Caco-2 (cell line): ENCODE measurements at regions of chr6 and their contacts with region 1.

Region 1: GRCh38 chr6:143965503-143966171 is 42.4 kb downstream of the PLAGL1 start:
- DNase-seq: no peak
- H3K4me3 ChIP-seq: no peak overlapping the region
- H3K4me3 Mint-ChIP-seq: no peak overlapping the region
- H3K27ac Mint-ChIP-seq: no peak overlapping the region
- H3K4me1 ChIP-seq: peaks cover 16% of the 10 kb centered on the region
- H3K4me1 Mint-ChIP-seq: peaks cover 7% of the 10 kb centered on the region
- H3K27me3 ChIP-seq: no peaks in the 10 kb centered on the region
- H3K27me3 Mint-ChIP-seq: peaks cover 31% of the 10 kb centered on the region
- CTCF ChIP-seq: no peak

Region 2: GRCh38 chr6:143928853-143929252 is 36.8 kb before region 1 on chr6:
- CTCF ChIA-PET with region 1: no interaction called
- POLR2A ChIA-PET with region 1: no interaction called
- intact Hi-C with region 1: no loop called
- DNase-seq: no peak
- H3K4me3 ChIP-seq: no peak overlapping the region
- H3K4me3 Mint-ChIP-seq: no peak overlapping the region
- H3K27ac Mint-ChIP-seq: no peak overlapping the region
- H3K4me1 ChIP-seq: no peaks in the 10 kb centered on the region
- H3K4me1 Mint-ChIP-seq: no peaks in the 10 kb centered on the region
- H3K27me3 ChIP-seq: no peaks in the 10 kb centered on the region
- H3K27me3 Mint-ChIP-seq: peaks cover 23% of the 10 kb centered on the region
- CTCF ChIP-seq: no peak

Region 3: DNA sequence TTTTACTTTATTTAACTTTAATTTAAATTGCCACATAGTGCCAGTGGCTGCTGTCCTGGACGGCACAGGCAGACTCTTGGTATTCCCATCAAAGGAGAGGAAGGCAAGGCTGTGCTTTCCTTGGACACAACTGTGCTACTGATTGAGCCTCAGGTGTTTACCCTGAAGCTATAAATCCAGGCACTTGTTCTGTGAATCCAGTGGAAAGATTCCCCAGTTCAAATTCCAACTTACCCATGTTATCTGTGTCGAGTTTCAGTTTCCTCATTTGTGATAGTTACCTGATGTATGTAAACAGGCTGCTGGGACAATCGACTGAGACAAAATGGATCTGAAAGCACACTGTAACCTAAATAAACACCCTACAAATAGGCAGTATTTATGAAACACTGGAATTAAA is 14.8 kb before region 1 on chr6:
- CTCF ChIA-PET with region 1: no interaction called
- POLR2A ChIA-PET with region 1: no interaction called
- intact Hi-C with region 1: loop called (anchors 1 kb)
- DNase-seq: peak in 1 of 2 experiments; percentile 23
- H3K4me3 ChIP-seq: no peak overlapping the region
- H3K4me3 Mint-ChIP-seq: no peak overlapping the region
- H3K27ac Mint-ChIP-seq: no peak overlapping the region
- H3K4me1 ChIP-seq: peaks cover 18% of the 10 kb centered on the region
- H3K4me1 Mint-ChIP-seq: peaks cover 6% of the 10 kb centered on the region
- H3K27me3 ChIP-seq: no peaks in the 10 kb centered on the region
- H3K27me3 Mint-ChIP-seq: no peaks in the 10 kb centered on the region
- CTCF ChIP-seq: no peak

Region 4: DNA sequence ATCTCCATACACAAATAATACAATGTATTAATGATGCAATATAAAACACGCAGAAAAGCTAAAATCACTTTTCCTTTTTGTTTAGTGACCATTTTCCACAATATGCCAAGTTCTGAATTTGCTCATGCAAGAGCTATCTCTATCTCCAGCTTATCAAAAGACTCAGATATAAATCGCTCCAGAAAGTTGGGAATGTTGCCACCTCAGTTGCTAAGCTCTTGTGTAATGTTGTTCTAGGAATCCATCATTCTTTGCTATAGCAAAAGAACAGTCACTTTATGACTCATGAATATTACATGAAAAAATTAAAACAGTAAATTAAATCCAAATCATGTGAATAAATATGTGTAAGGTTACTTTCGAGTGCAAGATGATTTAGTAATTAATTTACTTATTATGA is 33.8 kb after region 1 on chr6:
- CTCF ChIA-PET with region 1: no interaction called
- POLR2A ChIA-PET with region 1: no interaction called
- intact Hi-C with region 1: no loop called
- DNase-seq: no peak
- H3K4me3 ChIP-seq: no peak overlapping the region
- H3K4me3 Mint-ChIP-seq: no peak overlapping the region
- H3K27ac Mint-ChIP-seq: no peak overlapping the region
- H3K4me1 ChIP-seq: no peaks in the 10 kb centered on the region
- H3K4me1 Mint-ChIP-seq: no peaks in the 10 kb centered on the region
- H3K27me3 ChIP-seq: no peaks in the 10 kb centered on the region
- H3K27me3 Mint-ChIP-seq: peaks cover 5% of the 10 kb centered on the region
- CTCF ChIP-seq: no peak